ENCODE measurements at regions of chr1 and their contacts with region 1.

Region 1: GRCh38 chr1:151472856-151473731 is 13.8 kb upstream of the POGZ start:
- DNase-seq: no peak
- ATAC-seq: no peak
- H3K4me3 ChIP-seq: no peak overlapping the region
- H3K27ac ChIP-seq: no peak overlapping the region
- H3K4me1 ChIP-seq: peaks cover 0 to 11% of the 10 kb centered on the region in 2 experiments; a peak in 3 of 4 replicates
- H3K27me3 ChIP-seq: no peaks in the 10 kb centered on the region
- CTCF ChIP-seq: no peak
- POLR2A ChIP-seq: no peak
- RAD21 ChIP-seq: no peak

Region 2: DNA sequence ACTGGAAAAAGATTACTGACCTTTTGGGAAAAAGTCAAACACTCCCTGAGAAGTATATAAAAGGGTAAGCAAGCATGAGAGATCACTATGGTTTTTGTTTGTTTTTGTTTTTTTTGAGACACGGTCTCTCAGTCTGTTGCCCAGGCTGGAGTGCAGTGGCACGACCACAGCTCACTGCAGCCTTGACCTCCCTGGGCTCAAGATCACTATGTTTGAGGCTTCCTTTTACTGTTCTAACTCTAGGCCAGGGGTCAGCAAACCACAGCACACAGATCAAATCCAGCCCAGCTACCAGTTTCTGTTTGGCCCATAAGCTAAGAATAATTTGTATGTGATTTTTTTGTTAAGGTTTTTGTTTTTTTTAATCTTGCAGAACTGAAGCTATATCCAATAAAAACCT is 48.0 kb before region 1 on chr1:
- CTCF ChIA-PET with region 1: no interaction called
- POLR2A ChIA-PET with region 1: no interaction called
- RAD21 ChIA-PET with region 1: no interaction called
- intact Hi-C with region 1: no loop called
- DNase-seq: no peak
- ATAC-seq: no peak
- H3K4me3 ChIP-seq: no peak overlapping the region
- H3K27ac ChIP-seq: no peak overlapping the region
- H3K4me1 ChIP-seq: no peaks in the 10 kb centered on the region
- H3K27me3 ChIP-seq: no peaks in the 10 kb centered on the region
- CTCF ChIP-seq: no peak
- POLR2A ChIP-seq: no peak
- RAD21 ChIP-seq: no peak

Region 3: GRCh38 chr1:151459331-151460046 is 13.6 kb before region 1 on chr1 and contains the start of gene POGZ:
- CTCF ChIA-PET with region 1: interaction called, 4 read pairs
- POLR2A ChIA-PET with region 1: interaction called, 15 read pairs
- RAD21 ChIA-PET with region 1: no interaction called
- intact Hi-C with region 1: loop called (anchors 1 kb)
- DNase-seq: peak; percentile 94
- ATAC-seq: peak; percentile 88
- H3K4me3 ChIP-seq: peak within 1 kb of the TSS; percentile 62 to 89
- H3K27ac ChIP-seq: peak within 1 kb of the TSS; percentile 73
- H3K4me1 ChIP-seq: peaks cover 10 to 19% of the 10 kb centered on the region in 2 experiments; a peak in 3 of 4 replicates
- H3K27me3 ChIP-seq: no peaks in the 10 kb centered on the region
- CTCF ChIP-seq: no peak
- POLR2A ChIP-seq: peak; percentile 12
- RAD21 ChIP-seq: no peak
- total RNA-seq, gene POGZ: 80.6 TPM

Region 4: GRCh38 chr1:151494741-151495281 is 21.7 kb after region 1 on chr1:
- CTCF ChIA-PET with region 1: no interaction called
- POLR2A ChIA-PET with region 1: interaction called, 10 read pairs
- RAD21 ChIA-PET with region 1: no interaction called
- intact Hi-C with region 1: no loop called
- DNase-seq: peak; percentile 83
- ATAC-seq: peak; percentile 86
- H3K4me3 ChIP-seq: no peak overlapping the region
- H3K27ac ChIP-seq: no peak overlapping the region
- H3K4me1 ChIP-seq: peaks cover 27 to 33% of the 10 kb centered on the region in 2 experiments
- H3K27me3 ChIP-seq: no peaks in the 10 kb centered on the region
- CTCF ChIP-seq: no peak
- POLR2A ChIP-seq: no peak
- RAD21 ChIP-seq: no peak; the same call in 1 of the 2 replicates

Measured in HCT116 (cell line).